CD14-positive monocyte (primary cell): ENCODE measurements at regions of chr10 and their contacts with region 1.

Region 1: DNA sequence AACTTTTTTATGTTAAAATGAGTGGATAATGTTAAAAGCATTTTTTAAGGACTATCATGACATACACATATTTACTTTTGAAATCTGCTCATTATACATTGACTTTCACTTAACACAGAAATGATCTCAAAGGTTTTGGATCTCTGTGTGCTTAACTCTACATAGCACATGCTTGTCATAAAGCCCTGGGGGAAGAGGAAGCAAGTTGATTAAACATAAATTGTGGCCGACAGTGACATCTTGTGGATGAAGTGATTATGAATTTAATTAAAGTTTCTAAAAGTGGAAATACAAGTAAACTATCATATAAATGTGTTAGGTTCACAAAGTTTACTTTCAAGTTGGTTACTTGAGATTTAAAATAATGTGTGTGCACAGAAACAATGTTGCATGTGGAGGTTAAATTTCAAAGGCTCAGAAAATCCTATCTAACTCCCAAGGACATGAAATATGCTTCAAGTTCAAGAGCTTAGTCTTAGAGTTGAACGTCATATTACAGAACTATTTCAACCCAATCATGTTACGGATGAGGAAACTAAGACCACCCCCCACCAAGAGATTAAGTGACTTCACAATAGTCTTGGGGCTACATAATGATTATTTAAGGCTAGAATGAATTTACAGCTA is 1247.7 kb downstream of the GATA3 start:
- DNase-seq: peak; percentile 20 to 40 (median 33)
- H3K4me3 ChIP-seq: no peak overlapping the region
- H3K4me3 Mint-ChIP-seq: no peak overlapping the region
- H3K27ac ChIP-seq: no peak overlapping the region
- H3K27ac Mint-ChIP-seq: no peak overlapping the region
- H3K4me1 ChIP-seq: no peaks in the 10 kb centered on the region
- H3K4me1 Mint-ChIP-seq: no peaks in the 10 kb centered on the region
- H3K27me3 ChIP-seq: no peaks in the 10 kb centered on the region
- H3K27me3 Mint-ChIP-seq: peaks cover 0 to 1% (median 0%) of the 10 kb centered on the region in 3 donors
- CTCF ChIP-seq: peak; percentile 70

Region 2: GRCh38 chr10:7525314-7526016 is 1776.8 kb before region 1 on chr10:
- intact Hi-C with region 1: loop called in 1 of 2 experiments (anchors 10 kb)
- DNase-seq: peak; percentile 37 to 52 (median 47)
- H3K4me3 ChIP-seq: no peak overlapping the region
- H3K4me3 Mint-ChIP-seq: no peak overlapping the region
- H3K27ac ChIP-seq: no peak overlapping the region
- H3K27ac Mint-ChIP-seq: no peak overlapping the region
- H3K4me1 ChIP-seq: peaks cover 0 to 3% of the 10 kb centered on the region in 2 donors
- H3K4me1 Mint-ChIP-seq: peaks cover 8% of the 10 kb centered on the region
- H3K27me3 ChIP-seq: peaks cover 4 to 18% of the 10 kb centered on the region in 2 donors
- H3K27me3 Mint-ChIP-seq: peaks cover 8 to 22% (median 16%) of the 10 kb centered on the region in 3 donors
- CTCF ChIP-seq: peak; percentile 83

Region 3: DNA sequence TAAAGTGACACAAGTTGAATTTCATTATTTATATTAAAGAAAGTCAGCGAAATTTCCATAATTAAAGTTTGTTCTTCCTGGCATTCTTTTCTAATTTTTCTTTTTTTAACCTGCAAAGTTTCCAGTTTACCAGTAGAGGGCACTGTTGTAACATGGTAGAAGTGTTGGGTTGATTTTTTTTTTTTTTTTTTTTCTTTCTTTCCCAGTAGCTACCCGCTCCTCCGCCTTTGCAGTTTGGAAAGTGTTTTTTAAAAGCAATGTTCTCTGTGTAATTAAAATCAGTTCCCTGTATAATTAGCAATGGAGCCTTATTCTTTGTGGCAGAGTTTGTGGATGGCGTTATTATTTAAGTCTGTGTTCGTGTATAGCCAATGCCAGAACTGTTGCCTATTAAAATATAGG is 1430.2 kb before region 1 on chr10:
- intact Hi-C with region 1: loop called (anchors 5 kb)
- DNase-seq: peak in 2 of 3 donors; percentile 14 to 37
- H3K4me3 ChIP-seq: peak overlapping the region in 1 of 3 experiments; percentile 25
- H3K4me3 Mint-ChIP-seq: peak overlapping the region; percentile 54 to 82
- H3K27ac ChIP-seq: no peak overlapping the region
- H3K27ac Mint-ChIP-seq: no peak overlapping the region
- H3K4me1 ChIP-seq: no peaks in the 10 kb centered on the region
- H3K4me1 Mint-ChIP-seq: peaks cover 3% of the 10 kb centered on the region
- H3K27me3 ChIP-seq: no peaks in the 10 kb centered on the region
- H3K27me3 Mint-ChIP-seq: peaks cover 0 to 2% (median 0%) of the 10 kb centered on the region in 3 donors
- CTCF ChIP-seq: peak; percentile 86

Region 4: DNA sequence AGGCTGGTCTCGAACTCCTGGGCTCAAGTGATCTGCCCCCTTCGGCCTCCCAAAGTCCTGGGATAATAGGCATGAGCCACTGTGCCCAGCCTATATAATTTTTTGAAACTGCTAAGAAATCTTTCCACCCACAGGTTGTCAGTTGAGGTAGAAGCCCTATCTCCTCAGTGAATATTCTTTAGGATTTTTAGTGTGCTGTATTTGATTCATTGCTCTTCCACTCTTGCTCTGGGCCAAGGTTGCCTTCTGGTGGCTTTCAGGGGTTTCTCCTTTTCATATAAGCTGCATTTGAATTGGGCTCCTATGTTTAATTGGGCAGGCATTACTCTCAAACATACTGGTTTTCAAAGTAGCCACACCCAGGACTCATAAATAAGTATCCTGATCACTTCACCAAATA is 316.6 kb before region 1 on chr10:
- intact Hi-C with region 1: no loop called
- DNase-seq: no peak
- H3K4me3 ChIP-seq: no peak overlapping the region
- H3K4me3 Mint-ChIP-seq: no peak overlapping the region
- H3K27ac ChIP-seq: no peak overlapping the region
- H3K27ac Mint-ChIP-seq: no peak overlapping the region
- H3K4me1 ChIP-seq: no peaks in the 10 kb centered on the region
- H3K4me1 Mint-ChIP-seq: no peaks in the 10 kb centered on the region
- H3K27me3 ChIP-seq: no peaks in the 10 kb centered on the region
- H3K27me3 Mint-ChIP-seq: no peaks in the 10 kb centered on the region
- CTCF ChIP-seq: no peak

Region 5: GRCh38 chr10:9268176-9268575 is 34.1 kb before region 1 on chr10:
- intact Hi-C with region 1: no loop called
- DNase-seq: no peak
- H3K4me3 ChIP-seq: no peak overlapping the region
- H3K4me3 Mint-ChIP-seq: no peak overlapping the region
- H3K27ac ChIP-seq: no peak overlapping the region
- H3K27ac Mint-ChIP-seq: no peak overlapping the region
- H3K4me1 ChIP-seq: no peaks in the 10 kb centered on the region
- H3K4me1 Mint-ChIP-seq: peaks cover 4% of the 10 kb centered on the region
- H3K27me3 ChIP-seq: no peaks in the 10 kb centered on the region
- H3K27me3 Mint-ChIP-seq: peaks cover 2 to 8% (median 6%) of the 10 kb centered on the region in 3 donors
- CTCF ChIP-seq: no peak

Region 6: GRCh38 chr10:9547936-9548904 is 246.0 kb after region 1 on chr10:
- intact Hi-C with region 1: no loop called
- DNase-seq: no peak
- H3K4me3 ChIP-seq: no peak overlapping the region
- H3K4me3 Mint-ChIP-seq: no peak overlapping the region
- H3K27ac ChIP-seq: no peak overlapping the region
- H3K27ac Mint-ChIP-seq: no peak overlapping the region
- H3K4me1 ChIP-seq: no peaks in the 10 kb centered on the region
- H3K4me1 Mint-ChIP-seq: no peaks in the 10 kb centered on the region
- H3K27me3 ChIP-seq: no peaks in the 10 kb centered on the region
- H3K27me3 Mint-ChIP-seq: peaks cover 0 to 3% (median 0%) of the 10 kb centered on the region in 3 donors
- CTCF ChIP-seq: no peak